AG04449 (cell line): ENCODE measurements at regions of chr7 and their contacts with region 1.

Region 1: GRCh38 chr7:73451780-73452398 is 18.3 kb downstream of the FZD9 start:
- DNase-seq: no peak
- H3K4me3 ChIP-seq: no peak overlapping the region
- CTCF ChIP-seq: peak; percentile 85

Region 2: GRCh38 chr7:73329861-73330581 is 121.9 kb before region 1 on chr7:
- CTCF ChIA-PET with region 1: interaction called, 64 read pairs
- POLR2A ChIA-PET with region 1: no interaction called
- DNase-seq: no peak
- H3K4me3 ChIP-seq: no peak overlapping the region; the same call in 1 of the 2 replicates
- CTCF ChIP-seq: no peak

Region 3: DNA sequence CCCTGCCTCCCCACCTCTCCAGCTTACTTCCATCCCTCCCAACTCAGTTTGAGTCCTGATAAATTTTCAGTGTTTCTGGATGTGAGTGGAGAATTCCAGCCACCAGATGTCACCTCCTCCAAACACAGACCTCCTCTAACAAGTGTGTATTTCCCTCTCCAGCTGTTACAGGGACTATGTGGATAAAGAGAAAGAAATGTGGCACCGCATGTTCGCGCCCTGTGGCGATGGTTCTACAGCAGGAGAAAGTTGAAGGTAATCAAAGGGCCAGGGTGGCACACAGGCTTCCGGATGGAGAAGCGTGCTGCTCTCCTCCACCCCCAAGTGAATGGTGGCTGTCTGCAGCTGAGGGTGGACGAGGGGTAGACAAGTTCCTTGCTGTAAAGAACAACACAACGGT is 109.2 kb before region 1 on chr7:
- CTCF ChIA-PET with region 1: interaction called, 74 read pairs
- POLR2A ChIA-PET with region 1: no interaction called
- DNase-seq: no peak
- H3K4me3 ChIP-seq: peak overlapping the region; percentile 32; the same call in 1 of the 2 replicates
- CTCF ChIP-seq: peak; percentile 65

Region 4: DNA sequence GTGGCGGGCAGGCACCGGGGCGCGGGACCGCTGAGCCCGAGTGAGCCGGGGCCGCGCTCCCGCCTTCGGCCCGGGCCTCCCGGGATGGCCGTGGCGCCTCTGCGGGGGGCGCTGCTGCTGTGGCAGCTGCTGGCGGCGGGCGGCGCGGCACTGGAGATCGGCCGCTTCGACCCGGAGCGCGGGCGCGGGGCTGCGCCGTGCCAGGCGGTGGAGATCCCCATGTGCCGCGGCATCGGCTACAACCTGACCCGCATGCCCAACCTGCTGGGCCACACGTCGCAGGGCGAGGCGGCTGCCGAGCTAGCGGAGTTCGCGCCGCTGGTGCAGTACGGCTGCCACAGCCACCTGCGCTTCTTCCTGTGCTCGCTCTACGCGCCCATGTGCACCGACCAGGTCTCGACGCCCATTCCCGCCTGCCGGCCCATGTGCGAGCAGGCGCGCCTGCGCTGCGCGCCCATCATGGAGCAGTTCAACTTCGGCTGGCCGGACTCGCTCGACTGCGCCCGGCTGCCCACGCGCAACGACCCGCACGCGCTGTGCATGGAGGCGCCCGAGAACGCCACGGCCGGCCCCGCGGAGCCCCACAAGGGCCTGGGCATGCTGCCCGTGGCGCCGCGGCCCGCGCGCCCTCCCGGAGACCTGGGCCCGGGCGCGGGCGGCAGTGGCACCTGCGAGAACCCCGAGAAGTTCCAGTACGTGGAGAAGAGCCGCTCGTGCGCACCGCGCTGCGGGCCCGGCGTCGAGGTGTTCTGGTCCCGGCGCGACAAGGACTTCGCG is 17.8 kb before region 1 on chr7:
- CTCF ChIA-PET with region 1: interaction called, 33 read pairs
- POLR2A ChIA-PET with region 1: no interaction called
- DNase-seq: no peak
- H3K4me3 ChIP-seq: peak overlapping the region; percentile 61
- CTCF ChIP-seq: no peak

Region 5: DNA sequence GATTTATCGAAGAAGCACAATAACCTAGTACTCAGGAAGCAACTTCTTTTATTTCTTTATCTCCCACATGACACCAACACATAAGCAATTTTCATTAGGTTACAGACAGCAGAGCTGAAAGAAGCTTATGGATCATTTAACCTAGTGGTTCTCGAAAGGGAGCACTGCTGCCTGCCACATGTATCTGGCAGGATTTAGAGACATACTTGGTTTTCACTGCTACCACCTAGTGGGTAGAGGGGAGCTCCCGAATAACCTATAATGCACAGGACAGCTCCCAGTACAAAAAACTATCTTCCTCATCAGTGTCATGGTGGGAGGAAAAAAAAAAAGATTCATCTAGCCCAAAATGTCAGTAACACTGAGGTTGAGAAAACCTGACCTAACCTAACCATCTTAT is 16.2 kb after region 1 on chr7:
- CTCF ChIA-PET with region 1: interaction called, 20 read pairs
- POLR2A ChIA-PET with region 1: no interaction called
- DNase-seq: no peak
- H3K4me3 ChIP-seq: no peak overlapping the region
- CTCF ChIP-seq: no peak

Region 6: DNA sequence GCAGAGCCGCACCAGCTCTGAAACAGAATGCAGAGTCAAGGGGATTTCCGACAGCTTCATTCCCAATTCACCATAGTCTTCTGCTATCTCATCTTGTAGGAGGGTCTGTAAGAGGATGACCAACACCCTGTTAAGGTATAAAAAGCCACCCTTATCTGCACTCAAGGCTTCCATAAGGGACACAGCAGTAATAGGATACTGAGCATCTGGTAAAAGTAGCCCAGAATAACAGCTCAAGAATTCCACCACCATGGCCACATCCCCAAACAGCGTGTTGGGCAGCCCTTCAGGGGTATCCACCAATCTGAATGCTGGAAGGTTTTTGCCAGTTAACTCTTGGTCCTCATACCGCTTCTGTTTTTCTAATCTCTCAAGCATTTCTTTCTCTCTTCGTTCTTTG is 25.5 kb after region 1 on chr7:
- CTCF ChIA-PET with region 1: interaction called, 15 read pairs
- POLR2A ChIA-PET with region 1: no interaction called
- DNase-seq: no peak
- H3K4me3 ChIP-seq: no peak overlapping the region
- CTCF ChIP-seq: no peak

Region 7: DNA sequence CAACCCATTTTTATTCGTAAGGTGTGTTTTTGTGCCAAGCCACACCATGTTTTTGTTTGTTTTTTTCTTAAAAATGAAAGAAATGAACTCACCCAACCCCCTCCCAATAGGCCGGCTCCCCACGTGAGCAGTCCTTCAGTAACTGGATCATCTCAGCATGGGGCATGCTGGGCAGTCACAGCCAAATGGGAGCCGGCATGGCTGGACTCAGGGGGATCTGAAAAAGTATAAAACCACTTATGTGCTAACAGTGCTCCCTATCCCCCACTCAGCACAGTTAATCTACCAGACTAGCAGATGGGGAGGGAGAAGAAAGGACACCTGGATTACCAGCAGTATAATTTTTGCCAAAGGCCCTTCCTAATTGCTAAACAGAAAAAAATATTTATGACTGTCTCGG is 30.9 kb after region 1 on chr7:
- CTCF ChIA-PET with region 1: interaction called, 15 read pairs
- POLR2A ChIA-PET with region 1: no interaction called
- DNase-seq: no peak
- H3K4me3 ChIP-seq: no peak overlapping the region
- CTCF ChIP-seq: no peak